Posterior vena cava (tissue), 2 donors: ENCODE measurements at regions of chr10 and their contacts with region 1.

Region 1: GRCh38 chr10:69360485-69361324 is 56.0 kb downstream of the TACR2 start:
- DNase-seq: peak; percentile 92

Region 2: GRCh38 chr10:69146759-69147158 is 213.9 kb before region 1 on chr10:
- intact Hi-C with region 1: loop called in 1 of 2 experiments (anchors 10 kb)
- DNase-seq: no peak

Region 3: DNA sequence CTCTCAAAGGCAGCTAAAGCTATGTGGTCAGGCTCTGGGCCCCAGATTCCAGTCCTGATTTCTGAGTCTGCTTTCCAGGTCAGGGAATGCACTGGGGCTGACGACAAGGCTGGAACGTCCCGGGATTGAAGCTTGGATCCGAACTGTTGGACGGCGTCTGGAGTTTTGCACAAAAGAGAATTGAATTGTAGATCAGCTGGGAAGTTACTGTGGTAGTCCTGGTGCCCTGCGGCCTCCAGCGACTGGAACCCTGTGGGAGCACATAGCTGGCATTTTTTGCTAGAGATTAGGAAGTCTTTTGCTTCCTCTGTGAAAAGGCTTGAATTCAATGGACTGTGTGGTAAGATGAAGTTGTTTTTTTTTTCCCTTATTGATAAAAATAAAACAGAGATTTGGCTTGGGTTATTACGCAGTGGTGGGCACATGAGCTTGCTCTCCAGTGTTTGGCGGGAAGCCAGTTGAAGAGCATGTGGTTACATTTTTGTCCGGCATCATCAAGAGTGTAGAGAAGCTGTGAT is 82.2 kb before region 1 on chr10 and contains the start of gene HK1:
- intact Hi-C with region 1: loop called in 1 of 2 experiments (anchors 1 kb)
- DNase-seq: no peak
- total RNA-seq, gene HK1: 75.6 to 103 TPM

Region 4: DNA sequence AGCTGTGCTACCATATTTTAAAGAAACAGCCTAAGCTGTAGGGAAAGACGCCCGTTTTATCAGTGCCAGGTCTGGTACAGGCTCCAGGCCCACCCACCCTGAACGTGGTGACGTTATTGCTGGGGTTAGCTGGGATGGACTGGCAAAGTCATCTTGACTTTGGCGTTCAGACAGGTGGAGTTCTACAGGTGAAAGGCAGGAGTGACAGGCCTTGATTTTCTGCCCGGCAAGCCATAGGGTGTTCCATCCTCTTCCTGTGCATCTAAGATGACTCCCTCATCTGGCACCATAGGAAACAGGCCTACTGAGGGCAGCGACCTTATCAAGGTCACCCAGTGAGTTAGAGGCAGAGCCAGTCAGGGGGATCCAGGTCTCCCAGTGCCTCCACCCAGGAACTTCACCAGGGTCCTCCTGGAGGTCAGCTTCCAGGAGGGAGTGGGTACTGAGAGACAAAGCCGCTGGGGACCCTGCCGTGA is 40.8 kb before region 1 on chr10:
- intact Hi-C with region 1: loop called in 1 of 2 experiments (anchors 5 kb)
- DNase-seq: no peak

Region 5: GRCh38 chr10:69335063-69335587 is 25.6 kb before region 1 on chr10:
- intact Hi-C with region 1: no loop called
- DNase-seq: peak; percentile 84